AG04449 (cell line): ENCODE measurements at regions of chr11 and their contacts with region 1.

Region 1: DNA sequence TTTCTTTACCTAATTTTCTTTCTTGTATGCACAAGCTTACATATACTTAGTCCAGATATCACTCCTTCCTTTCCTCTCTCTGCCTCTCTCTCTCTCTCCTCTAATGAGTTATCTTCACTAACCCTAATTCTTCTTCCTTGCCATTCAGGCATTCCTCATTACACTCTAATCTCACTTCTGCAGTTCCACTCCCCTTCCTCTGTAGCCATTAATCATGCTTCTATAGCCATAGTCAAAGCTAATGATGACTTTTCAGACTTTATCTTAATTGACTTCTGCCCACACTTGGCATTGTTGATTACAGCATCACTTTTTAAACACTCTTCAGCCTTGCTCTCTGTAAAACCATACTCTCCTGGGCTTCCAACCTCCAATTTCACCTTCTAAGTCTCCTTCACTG is 35.3 kb upstream of the SC5D start:
- DNase-seq: no peak
- H3K4me3 ChIP-seq: no peak overlapping the region
- CTCF ChIP-seq: no peak

Region 2: DNA sequence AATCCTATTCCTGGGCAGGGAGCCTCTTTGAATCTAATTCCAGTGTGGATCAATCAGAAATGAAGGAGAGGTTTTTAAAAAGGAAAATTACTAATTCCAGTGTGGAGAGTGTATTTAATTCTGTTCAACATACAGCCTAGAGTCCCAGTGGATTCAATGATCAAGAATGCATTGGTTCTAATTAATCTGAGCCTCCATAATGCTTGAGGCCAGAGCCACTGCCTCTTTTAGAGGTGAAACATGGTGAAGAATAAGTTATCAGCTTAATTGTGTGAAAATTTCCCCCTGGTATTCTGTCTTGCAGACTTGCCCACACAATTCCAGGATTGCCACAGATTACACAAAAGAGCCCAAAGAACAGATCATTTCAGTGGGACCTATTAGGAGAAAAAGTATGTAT is 68.5 kb before region 1 on chr11:
- CTCF ChIA-PET with region 1: no interaction called
- POLR2A ChIA-PET with region 1: no interaction called
- DNase-seq: no peak
- H3K4me3 ChIP-seq: no peak overlapping the region
- CTCF ChIP-seq: no peak

Region 3: GRCh38 chr11:121241343-121242211 is 15.7 kb before region 1 on chr11:
- CTCF ChIA-PET with region 1: interaction called, 16 read pairs
- POLR2A ChIA-PET with region 1: no interaction called
- DNase-seq: no peak
- H3K4me3 ChIP-seq: no peak overlapping the region
- CTCF ChIP-seq: no peak

Region 4: GRCh38 chr11:121563900-121564822 is 306.9 kb after region 1 on chr11:
- CTCF ChIA-PET with region 1: no interaction called
- POLR2A ChIA-PET with region 1: no interaction called
- DNase-seq: no peak
- H3K4me3 ChIP-seq: no peak overlapping the region
- CTCF ChIP-seq: no peak